ENCODE measurements at regions of chr1 and their contacts with region 1.

Region 1: GRCh38 chr1:207004981-207005830 is 27.4 kb downstream of the C1orf116 start:
- DNase-seq: peak; percentile 73
- H3K4me3 ChIP-seq: no peak overlapping the region
- H3K27ac ChIP-seq: peak overlapping the region; percentile 100
- H3K4me1 ChIP-seq: peaks cover 73% of the 10 kb centered on the region
- H3K27me3 ChIP-seq: no peaks in the 10 kb centered on the region
- CTCF ChIP-seq: peak; percentile 90 to 94

Region 2: DNA sequence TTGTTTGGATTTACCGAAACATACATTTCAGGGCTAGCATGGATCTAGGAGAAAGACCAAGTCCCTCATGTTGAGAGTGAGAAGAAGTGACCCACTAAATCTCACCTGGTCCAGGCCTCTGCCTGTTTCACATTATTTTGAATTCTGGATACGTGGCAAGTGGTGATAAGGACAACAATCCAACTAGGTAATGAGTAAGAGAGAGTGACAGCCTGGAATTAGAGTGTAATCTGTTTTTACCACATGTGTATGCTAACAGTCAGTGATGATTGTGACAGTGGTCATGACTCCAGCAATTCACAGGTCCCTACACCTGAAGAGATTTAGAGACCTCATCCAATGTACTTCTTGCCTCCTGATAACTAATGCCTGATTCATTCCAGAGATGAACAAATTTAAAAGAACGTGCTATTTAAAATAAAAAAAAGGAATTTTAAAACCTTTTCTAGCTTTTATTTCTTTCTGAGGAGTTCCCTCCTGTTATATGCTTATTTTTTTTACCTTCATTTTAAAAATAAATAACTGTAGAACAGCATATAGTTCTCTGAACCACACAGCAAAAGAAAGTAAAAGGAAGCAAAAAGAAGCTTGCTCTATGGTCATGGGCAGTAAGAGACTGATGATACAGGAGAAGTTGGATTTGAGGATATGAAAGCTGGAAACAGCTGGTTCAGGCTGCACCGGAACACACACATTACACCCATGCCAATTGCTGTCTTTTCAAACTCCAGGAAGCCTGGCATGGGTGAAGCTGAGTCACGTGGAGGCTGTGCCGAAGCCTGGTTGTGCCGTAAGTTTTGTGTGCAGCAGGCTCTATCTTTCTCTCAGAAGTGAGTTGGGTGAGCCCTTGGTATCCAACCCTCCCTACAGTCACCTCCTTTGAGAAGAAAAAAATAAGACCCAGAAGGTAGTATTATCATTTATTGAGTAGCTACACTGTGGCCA is 12.7 kb after region 1 on chr1:
- CTCF ChIA-PET with region 1: interaction called, 4 read pairs
- dilution Hi-C with region 1: no loop called
- in situ Hi-C with region 1: no loop called
- intact Hi-C with region 1: loop called (anchors 1 kb)
- DNase-seq: peak; percentile 78
- H3K4me3 ChIP-seq: no peak overlapping the region
- H3K27ac ChIP-seq: peak overlapping the region; percentile 100
- H3K4me1 ChIP-seq: peaks cover 59% of the 10 kb centered on the region
- H3K27me3 ChIP-seq: no peaks in the 10 kb centered on the region
- CTCF ChIP-seq: no peak

Region 3: DNA sequence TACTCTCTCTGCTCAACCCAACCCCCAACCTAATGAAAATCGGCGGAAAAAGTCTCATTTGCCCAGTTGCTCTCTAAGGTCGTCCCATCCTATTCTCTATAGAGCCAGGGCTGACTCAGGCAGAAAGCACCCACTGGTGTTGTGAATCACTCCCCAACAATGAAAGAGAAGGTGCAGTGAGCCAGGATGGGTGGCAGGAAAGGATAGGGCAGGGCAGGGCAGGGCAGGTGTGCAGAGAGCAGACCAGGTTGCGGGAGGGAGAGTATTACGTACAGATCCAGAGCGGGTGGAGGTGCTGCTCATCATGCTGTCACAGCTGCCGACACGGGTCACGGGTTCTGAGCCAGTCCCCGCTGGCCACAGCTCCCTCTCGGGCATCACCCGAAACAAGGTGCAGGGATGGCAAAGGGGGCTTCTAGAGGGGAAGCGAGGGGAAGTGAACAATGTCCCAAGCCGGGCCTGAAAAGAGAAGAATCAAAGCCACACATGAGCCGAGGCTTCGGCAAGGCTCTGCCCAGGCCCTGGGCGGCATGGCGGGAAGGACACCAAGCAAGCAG is 22.1 kb after region 1 on chr1:
- CTCF ChIA-PET with region 1: no interaction called
- dilution Hi-C with region 1: no loop called
- in situ Hi-C with region 1: no loop called
- intact Hi-C with region 1: loop called (anchors 1 kb)
- DNase-seq: peak; percentile 99
- H3K4me3 ChIP-seq: peak overlapping the region; percentile 17 to 48 (median 37)
- H3K27ac ChIP-seq: peak overlapping the region; percentile 100
- H3K4me1 ChIP-seq: peaks cover 69% of the 10 kb centered on the region
- H3K27me3 ChIP-seq: no peaks in the 10 kb centered on the region
- CTCF ChIP-seq: no peak

Region 4: DNA sequence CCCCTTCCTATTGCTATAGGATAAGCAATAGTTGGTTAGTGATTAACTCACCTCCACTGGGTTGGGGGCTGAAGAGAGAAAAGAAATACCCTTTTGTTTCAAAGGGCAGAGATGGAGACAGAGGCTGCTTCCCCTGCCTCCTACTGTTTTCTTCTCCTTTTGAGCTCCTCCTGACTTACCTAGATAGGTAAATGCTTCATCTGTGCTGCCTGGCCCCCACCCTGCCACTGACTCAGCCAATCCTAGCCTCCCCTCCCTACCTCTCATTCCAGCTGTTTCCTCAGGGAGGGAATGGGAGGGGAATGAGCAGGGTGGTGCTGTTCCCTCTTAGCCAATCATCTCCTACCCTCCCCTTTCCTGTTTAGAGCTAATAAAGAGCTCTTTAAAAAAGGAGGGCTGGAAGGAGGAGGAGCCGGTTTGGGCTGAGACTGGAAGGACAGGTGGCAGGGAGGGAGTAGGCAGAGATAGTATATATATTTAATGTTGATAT is 27.4 kb after region 1 on chr1 and contains the start of gene C1orf116:
- CTCF ChIA-PET with region 1: no interaction called
- dilution Hi-C with region 1: no loop called
- in situ Hi-C with region 1: no loop called
- intact Hi-C with region 1: loop called (anchors 1 kb)
- DNase-seq: peak; percentile 99
- H3K4me3 ChIP-seq: peak within 1 kb of the TSS; percentile 46 to 78 (median 72)
- H3K27ac ChIP-seq: peak within 1 kb of the TSS; percentile 100
- H3K4me1 ChIP-seq: peaks cover 57% of the 10 kb centered on the region
- H3K27me3 ChIP-seq: no peaks in the 10 kb centered on the region
- CTCF ChIP-seq: no peak
- total RNA-seq, gene C1orf116: 94.0 to 129 TPM

Measured in mammary epithelial cell (primary cell).